Right cardiac atrium (tissue), 5 donors: ENCODE measurements at regions of chr10 and their contacts with region 1.

Region 1: DNA sequence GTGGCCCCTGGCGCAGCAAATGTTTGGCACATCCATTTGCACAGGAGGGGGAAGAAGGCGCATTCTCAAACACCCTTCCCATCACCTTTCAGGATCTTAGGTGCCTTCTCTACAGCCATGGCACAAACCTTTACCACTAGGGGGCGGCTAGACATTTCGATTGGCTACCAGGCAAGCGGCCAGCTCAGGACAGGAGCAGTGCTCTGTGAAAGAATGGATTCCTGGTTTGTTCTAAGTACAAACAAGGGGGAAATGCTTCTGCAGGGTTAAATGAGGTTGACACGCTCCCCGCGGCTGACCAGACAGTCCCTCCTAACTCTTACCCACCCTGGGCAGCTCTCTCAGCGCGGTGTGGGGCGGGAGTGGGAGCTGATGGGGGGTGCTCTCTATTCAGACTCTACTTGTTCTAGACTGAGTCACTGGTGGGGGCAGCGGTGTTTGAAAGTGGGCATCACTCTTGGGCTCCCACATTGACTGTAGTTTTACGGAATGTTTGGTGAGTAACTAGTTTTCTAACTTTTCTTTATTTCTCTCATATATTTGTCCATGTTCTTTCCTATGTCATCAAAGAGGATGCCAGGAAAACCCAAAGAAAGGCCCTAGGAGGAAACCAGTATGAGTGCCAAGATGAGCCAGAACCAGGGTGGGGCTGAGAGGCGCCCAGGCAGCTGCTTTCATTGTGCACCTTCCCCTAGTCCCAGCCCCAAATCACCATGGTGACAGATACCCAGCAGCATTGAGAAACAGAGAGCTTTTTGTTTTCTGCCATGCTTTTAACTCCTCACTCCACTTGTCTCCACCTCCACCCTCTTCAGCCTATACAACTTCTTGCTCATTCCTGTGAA is 61.4 kb upstream of the GPR158 start:
- DNase-seq: peak; percentile 76 to 91 (median 76)
- ATAC-seq: peak; percentile 88 to 89
- H3K4me3 ChIP-seq: no peak overlapping the region
- H3K27ac ChIP-seq: no peak overlapping the region
- H3K4me1 ChIP-seq: no peaks in the 10 kb centered on the region
- H3K27me3 ChIP-seq: no peaks in the 10 kb centered on the region

Region 2: DNA sequence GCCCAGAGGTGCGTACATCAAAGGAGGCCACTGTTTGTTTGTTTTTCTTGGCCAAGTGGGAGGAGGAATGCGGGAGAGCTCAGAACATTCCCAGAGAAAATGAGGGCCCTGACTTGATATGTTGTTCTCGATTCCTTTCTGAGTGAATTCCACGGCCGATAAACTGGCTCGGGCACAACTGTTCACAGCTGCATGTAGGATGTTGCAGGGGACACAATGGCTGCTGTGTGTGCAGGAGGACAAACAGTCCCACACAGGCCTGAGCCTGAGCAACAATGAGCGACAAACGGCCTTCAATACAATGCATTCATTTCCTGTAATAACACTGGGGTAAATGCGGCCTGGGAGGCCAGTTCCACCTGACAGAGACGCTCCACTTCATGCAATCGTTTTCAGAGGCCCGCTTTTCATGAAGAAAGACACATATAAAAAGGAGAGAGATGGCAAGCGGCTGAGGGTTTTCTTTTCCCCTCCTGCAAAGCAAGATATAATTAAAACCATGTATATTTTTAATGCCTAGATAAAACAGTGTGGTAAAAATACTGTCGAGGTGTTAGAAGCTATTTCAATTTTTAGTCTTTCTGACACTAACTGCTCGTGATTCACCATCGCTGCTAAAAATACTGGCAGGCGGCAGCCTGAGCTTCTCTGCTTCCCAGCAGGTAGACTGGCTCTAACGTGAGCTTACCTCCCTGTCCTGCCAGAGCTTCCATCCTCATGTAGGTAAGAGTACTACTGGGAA is 301.4 kb before region 1 on chr10:
- intact Hi-C with region 1: no loop called
- DNase-seq: peak; percentile 20 to 83 (median 65)
- ATAC-seq: peak; percentile 77 to 88
- H3K4me3 ChIP-seq: no peak overlapping the region
- H3K27ac ChIP-seq: peak overlapping the region; percentile 81
- H3K4me1 ChIP-seq: no peaks in the 10 kb centered on the region
- H3K27me3 ChIP-seq: no peaks in the 10 kb centered on the region

Region 3: GRCh38 chr10:25226775-25227682 is 113.6 kb after region 1 on chr10:
- intact Hi-C with region 1: loop called in 1 of 4 experiments (anchors 10 kb)
- DNase-seq: peak; percentile 16 to 38 (median 31)
- ATAC-seq: peak in 1 of 2 donors; percentile 57
- H3K4me3 ChIP-seq: no peak overlapping the region
- H3K27ac ChIP-seq: no peak overlapping the region
- H3K4me1 ChIP-seq: no peaks in the 10 kb centered on the region
- H3K27me3 ChIP-seq: no peaks in the 10 kb centered on the region

Region 4: DNA sequence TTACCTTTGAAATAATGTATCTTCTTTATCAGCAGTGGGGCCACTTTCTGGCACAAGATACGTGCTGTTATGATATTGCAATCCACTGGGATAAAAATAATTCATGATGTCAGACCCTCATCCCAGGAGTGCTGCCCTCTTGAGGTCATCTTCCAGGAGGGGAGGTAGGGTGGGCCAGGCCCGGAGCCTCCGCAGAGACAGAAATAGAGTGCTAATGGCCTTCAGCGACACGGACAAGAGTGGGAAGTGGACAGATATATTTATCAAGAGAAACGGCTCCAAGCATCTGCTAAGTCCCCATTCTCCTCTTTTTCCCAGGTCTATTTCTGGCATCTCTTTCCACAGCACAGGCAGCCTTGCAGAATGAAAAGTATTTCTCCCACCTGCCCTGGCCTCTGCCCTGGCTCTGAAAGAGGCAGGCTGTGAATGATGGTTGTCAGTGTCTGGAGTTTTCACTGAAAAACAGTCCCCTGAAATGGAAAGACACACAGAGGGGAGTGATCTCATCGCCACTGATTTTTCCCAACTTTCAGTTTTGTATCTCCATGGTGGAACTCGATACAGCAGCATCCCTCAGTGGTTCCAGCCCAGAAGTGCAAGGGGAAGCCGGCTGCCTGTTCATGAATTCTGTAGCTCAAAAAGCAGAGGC is 568.9 kb after region 1 on chr10:
- intact Hi-C with region 1: loop called in 3 of 4 experiments (anchors 10 kb)
- DNase-seq: peak in 2 of 3 donors; percentile 52 to 55
- ATAC-seq: peak; percentile 84 to 86
- H3K4me3 ChIP-seq: peak overlapping the region; percentile 44
- H3K27ac ChIP-seq: peak overlapping the region; percentile 82
- H3K4me1 ChIP-seq: no peaks in the 10 kb centered on the region
- H3K27me3 ChIP-seq: no peaks in the 10 kb centered on the region